PC-9 (cell line): ENCODE measurements at regions of chr22 and their contacts with region 1.

Region 1: DNA sequence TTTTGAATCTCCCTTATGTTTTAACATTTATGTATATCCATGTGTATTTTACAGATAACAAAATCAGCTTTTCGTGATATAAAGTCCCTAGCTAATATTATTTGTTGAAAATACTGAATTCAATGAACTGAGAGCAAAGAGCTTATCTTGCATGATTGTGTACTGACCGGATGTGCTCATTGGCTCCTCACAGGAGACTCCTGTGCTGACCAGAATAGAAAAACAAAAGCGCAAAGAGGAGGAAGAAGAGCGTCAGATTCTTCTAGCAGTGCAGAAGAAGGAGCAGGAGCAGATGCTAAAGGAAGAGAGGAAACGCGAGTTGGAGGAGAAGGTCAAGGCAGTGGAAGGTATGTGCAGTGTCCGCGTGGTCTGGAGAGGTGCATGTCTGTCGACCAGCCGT is 39.4 kb upstream of the SLC25A18 start:
- DNase-seq: no peak
- H3K4me3 ChIP-seq: no peak overlapping the region
- H3K27ac ChIP-seq: no peak overlapping the region
- H3K4me1 ChIP-seq: no peaks in the 10 kb centered on the region
- H3K27me3 ChIP-seq: peaks cover 43% of the 10 kb centered on the region
- CTCF ChIP-seq: no peak

Region 2: DNA sequence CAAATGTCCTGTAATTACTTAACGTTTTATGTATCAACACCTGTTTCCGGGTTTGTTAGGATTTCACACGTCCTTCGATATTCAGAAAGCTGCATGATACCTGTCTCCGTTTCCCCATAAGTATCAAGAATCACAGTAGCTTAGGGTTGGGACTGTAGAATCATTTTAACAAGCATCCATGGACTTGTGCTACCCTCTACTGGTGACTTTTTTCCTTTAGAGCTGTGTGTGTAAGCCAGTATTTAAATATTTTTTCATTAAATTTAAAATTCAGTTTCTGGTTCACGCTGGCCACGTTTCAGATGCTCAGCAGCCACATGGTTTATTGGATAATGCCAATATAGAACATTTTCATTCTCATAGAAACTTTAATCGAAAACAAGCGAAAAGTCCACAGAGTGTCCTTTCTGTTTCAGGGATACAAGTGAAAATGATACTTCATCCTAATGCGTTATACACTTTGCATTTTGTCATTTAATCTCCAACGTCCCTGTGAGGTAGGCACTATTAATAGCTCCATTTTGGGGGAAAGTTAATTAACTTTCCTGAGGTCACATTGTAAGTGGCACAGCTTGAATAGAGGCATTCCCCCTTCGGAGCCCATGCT is 22.1 kb before region 1 on chr22:
- CTCF ChIA-PET with region 1: interaction called, 11 read pairs
- POLR2A ChIA-PET with region 1: no interaction called
- intact Hi-C with region 1: no loop called
- DNase-seq: peak in 1 of 2 experiments; percentile 10
- H3K4me3 ChIP-seq: no peak overlapping the region
- H3K27ac ChIP-seq: no peak overlapping the region
- H3K4me1 ChIP-seq: no peaks in the 10 kb centered on the region
- H3K27me3 ChIP-seq: peaks cover 48% of the 10 kb centered on the region
- CTCF ChIP-seq: peak; percentile 75

Region 3: DNA sequence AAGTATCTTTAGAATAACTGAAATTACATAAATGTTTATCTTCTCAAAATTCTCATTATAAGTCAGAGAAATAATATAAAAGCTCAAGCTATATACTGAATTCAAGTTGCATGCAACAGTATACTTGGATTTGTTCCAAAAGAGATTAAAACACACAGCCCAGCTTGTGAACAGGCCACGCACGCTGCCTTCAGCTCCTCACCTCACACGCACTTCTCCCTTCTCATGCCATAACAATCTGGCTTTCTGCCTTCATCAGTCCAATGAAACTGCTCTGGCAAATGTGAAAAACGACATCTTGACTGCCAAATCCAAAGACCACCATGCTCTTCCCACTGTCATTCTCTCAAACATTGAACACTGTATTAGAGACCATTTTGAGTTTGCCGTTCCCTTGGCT is 82.6 kb after region 1 on chr22:
- CTCF ChIA-PET with region 1: interaction called, 11 read pairs
- POLR2A ChIA-PET with region 1: no interaction called
- intact Hi-C with region 1: no loop called
- DNase-seq: no peak
- H3K4me3 ChIP-seq: no peak overlapping the region
- H3K27ac ChIP-seq: no peak overlapping the region
- H3K4me1 ChIP-seq: no peaks in the 10 kb centered on the region
- H3K27me3 ChIP-seq: no peaks in the 10 kb centered on the region
- CTCF ChIP-seq: no peak

Region 4: DNA sequence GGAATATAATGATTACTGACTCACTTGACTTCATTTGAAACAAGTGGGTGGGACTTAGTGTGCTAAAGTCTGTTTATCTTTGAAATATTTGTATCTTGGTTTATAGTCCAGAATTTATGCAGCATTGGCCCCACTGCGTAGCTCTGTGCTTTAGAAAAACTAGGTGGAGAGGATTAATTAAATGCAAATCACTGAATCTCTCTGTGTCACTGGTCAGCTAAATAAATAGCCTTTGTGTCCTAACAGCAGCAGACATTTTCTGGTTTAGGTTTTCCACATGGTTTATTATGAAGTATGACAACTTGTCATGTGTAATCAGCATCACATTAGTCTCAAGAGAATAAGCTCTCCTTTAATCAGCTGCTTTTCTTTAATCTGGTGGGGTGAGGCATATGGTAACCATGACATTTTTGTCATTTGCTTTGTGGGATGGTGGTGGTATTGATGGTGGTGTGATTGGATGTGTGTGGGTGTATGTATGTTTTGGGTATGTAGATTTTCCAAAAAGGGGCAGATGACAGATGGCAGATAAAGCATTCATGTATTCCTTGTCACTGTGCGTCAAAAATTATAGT is 148.6 kb after region 1 on chr22:
- CTCF ChIA-PET with region 1: no interaction called
- POLR2A ChIA-PET with region 1: interaction called, 18 read pairs
- intact Hi-C with region 1: no loop called
- DNase-seq: no peak
- H3K4me3 ChIP-seq: no peak overlapping the region
- H3K27ac ChIP-seq: peak overlapping the region; percentile 40
- H3K4me1 ChIP-seq: peaks cover 8% of the 10 kb centered on the region
- H3K27me3 ChIP-seq: no peaks in the 10 kb centered on the region
- CTCF ChIP-seq: no peak